ENCODE measurements at regions of chr10 and their contacts with region 1.

Region 1: GRCh38 chr10:97334370-97335175 is at the start of gene FRAT2:
- DNase-seq: peak; percentile 96
- total RNA-seq, gene FRAT2: 4.8 TPM

Region 2: GRCh38 chr10:97278491-97278989 is 56.0 kb before region 1 on chr10:
- intact Hi-C with region 1: loop called (anchors 2 kb)
- DNase-seq: no peak

Region 3: GRCh38 chr10:97292097-97292862 is 42.3 kb before region 1 on chr10 and contains the start of gene ARHGAP19:
- intact Hi-C with region 1: loop called (anchors 5 kb)
- DNase-seq: peak; percentile 96
- total RNA-seq, gene ARHGAP19: 4.4 TPM

Region 4: DNA sequence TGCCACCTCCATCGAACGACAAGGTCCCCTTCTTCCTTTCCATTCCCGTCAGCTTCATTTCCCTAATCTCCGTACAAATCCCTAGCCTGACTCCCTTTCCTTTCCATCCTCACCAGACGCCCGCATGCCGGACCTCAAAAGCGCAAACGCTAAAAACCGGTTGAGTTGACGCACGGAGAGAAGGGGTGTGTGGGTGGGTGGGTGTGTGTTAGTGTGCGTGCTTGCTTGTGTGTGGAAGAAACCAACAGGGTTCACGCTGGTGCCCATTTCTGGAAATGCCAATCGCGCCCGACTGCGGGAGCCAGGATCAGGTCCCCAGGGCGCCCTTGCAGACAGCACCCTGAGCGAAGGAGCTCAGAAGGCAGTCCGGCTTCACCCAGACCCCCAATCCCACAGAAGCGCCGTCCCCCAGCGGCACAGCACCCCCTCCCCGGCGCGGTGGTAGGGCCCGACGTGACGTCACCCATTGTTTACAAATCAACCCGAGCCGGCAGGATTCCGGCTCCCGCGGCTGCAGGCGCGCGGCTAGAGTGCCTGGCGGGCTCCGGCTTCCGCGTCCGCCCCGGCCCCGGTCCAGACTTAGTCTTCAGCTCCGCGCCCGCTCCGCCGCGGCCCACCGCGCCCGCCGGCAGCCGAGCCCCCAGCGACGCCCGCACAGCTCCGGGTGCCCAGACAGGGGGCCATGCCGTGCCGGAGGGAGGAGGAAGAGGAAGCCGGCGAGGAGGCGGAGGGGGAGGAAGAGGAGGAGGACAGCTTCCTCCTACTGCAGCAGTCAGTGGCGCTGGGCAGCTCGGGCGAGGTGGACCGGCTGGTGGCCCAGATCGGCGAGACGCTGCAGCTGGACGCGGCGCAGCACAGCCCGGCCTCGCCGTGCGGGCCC is 15.6 kb before region 1 on chr10 and contains the start of gene FRAT1:
- intact Hi-C with region 1: loop called (anchors 1 kb)
- DNase-seq: peak; percentile 96
- total RNA-seq, gene FRAT1: 1.6 TPM

Region 5: GRCh38 chr10:97714048-97714371 is 379.4 kb after region 1 on chr10:
- intact Hi-C with region 1: no loop called
- DNase-seq: peak; percentile 85